ENCODE measurements at regions of chr19 and their contacts with region 1.

Region 1: GRCh38 chr19:42396381-42397262 is 6.5 kb upstream of the CNFN start:
- H3K4me3 ChIP-seq: peak overlapping the region; percentile 61
- H3K27ac ChIP-seq: peak overlapping the region; percentile 91
- H3K4me1 ChIP-seq: peaks cover 13% of the 10 kb centered on the region
- CTCF ChIP-seq: no peak

Region 2: DNA sequence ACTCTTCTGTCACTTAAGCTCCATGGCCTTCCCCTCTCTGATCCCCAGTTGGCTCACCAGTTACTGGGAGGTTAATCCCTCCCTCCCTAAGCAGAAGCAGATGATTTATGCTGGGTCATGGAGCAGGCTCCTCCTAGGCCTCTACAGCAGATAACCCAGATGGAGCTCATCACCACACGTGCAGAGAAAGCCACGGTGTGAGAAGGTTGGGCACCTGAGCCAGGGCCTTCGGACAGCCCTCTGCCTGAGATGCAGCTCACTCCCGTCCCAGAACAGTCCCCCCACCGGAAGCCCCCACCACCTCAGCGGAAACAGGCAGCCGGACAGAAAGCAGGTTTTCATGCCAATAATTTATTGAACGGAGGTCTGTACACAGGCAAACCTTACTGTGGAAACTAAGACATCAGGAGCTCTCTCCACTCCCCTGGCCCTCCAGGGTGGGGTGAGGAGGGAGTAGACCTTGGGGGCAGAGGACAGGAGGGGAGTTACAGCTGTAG is 166.7 kb before region 1 on chr19:
- CTCF ChIA-PET with region 1: no interaction called
- POLR2A ChIA-PET with region 1: interaction called, 11 read pairs
- H3K4me3 ChIP-seq: no peak overlapping the region
- H3K27ac ChIP-seq: peak overlapping the region; percentile 34; the same call in 1 of the 2 replicates
- H3K4me1 ChIP-seq: no peaks in the 10 kb centered on the region
- CTCF ChIP-seq: no peak

Region 3: GRCh38 chr19:42363614-42364346 is 32.8 kb before region 1 on chr19:
- CTCF ChIA-PET with region 1: interaction called, 3 read pairs
- POLR2A ChIA-PET with region 1: interaction called, 11 read pairs
- H3K4me3 ChIP-seq: no peak overlapping the region
- H3K27ac ChIP-seq: no peak overlapping the region
- H3K4me1 ChIP-seq: 0 out of 2 replicates have a peak, but pooled peaks cover 3% of the 10 kb centered on the region
- CTCF ChIP-seq: no peak

Region 4: DNA sequence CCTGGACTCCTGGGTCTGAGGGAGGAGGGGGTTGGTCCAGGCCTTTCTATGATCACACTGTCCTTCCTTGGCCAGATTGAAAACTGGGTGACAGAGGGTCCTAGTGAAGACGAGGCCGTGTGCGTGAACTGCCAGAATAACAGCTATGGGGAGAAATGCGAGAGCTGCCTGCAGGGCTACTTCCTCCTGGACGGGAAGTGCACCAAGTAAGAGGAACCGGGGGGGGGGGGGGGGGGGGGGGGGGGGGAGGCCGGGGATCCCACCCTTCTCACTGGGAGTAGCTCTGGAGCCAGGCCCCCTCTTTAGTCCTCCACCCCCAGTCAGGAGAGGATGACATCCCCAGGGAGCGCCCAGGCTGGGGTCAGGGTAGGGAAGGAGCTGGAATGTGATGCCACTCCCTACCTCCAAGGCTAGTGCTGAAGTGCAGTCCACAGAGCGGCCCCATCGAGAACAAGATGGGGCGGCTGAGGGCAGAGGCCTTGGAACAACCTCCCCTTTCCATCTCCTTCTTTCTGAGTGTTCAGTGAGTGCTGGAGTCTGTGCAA is 25.9 kb before region 1 on chr19:
- CTCF ChIA-PET with region 1: interaction called, 4 read pairs
- POLR2A ChIA-PET with region 1: interaction called, 11 read pairs
- H3K4me3 ChIP-seq: no peak overlapping the region
- H3K27ac ChIP-seq: no peak overlapping the region
- H3K4me1 ChIP-seq: 0 out of 2 replicates have a peak, but pooled peaks cover 3% of the 10 kb centered on the region
- CTCF ChIP-seq: no peak

Region 5: DNA sequence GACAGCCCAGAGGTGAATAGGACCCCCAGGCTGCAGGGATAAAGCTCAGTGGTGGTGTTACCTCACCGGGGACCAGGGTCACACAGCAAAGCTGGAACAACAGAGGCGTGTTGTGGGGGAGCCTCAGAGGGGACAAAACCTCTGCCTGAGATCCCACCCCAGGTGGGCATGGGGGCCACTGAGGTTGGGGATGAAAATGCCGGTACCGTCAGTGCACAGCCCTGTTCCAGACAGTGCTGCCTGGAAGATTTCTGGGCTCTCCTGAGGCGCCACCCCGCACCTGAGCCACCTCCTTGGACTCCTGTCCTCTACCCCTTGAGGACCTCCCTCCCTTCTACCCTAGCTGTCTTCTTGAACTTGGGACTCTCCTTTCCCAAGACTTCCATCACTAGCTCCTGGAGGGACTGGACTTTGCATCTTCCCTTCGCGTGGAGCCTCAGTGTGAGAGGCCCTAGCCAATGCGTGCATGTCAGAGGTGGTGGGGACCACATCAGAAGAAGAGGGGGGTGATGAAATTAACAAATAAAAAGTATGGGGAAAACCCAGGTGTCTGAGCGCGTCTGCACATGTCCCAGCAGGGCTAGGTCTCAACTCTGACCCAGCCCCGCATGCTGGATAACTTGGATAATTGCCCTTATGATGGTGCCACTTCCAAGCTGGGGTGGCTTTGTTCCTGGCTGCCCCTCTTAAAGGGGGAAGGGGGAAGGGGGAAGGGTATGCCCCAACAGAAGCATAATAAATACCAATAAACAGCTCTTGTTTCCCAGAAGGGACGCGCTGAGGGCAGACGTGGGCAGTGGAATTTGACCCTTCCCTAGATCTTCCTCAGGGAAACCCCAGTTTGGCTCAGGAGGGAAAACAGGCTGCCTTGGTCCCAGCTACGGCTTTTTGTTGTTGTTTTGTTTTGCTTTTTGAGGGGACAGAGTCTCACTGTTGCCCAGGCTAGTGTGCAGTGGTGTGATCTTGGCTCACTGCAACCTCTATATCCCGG is 18.1 kb before region 1 on chr19:
- CTCF ChIA-PET with region 1: interaction called, 10 read pairs
- POLR2A ChIA-PET with region 1: interaction called, 41 read pairs
- H3K4me3 ChIP-seq: no peak overlapping the region
- H3K27ac ChIP-seq: no peak overlapping the region
- H3K4me1 ChIP-seq: no peaks in the 10 kb centered on the region
- CTCF ChIP-seq: no peak

Region 6: GRCh38 chr19:42412227-42412626 is 15.6 kb after region 1 on chr19:
- CTCF ChIA-PET with region 1: interaction called, 12 read pairs
- POLR2A ChIA-PET with region 1: interaction called, 19 read pairs
- H3K4me3 ChIP-seq: no peak overlapping the region
- H3K27ac ChIP-seq: peak overlapping the region; percentile 11; the same call in 1 of the 2 replicates
- H3K4me1 ChIP-seq: peaks cover 8% of the 10 kb centered on the region
- CTCF ChIP-seq: no peak

Region 7: GRCh38 chr19:42498169-42498757 is 101.6 kb after region 1 on chr19:
- CTCF ChIA-PET with region 1: no interaction called
- POLR2A ChIA-PET with region 1: no interaction called
- H3K4me3 ChIP-seq: no peak overlapping the region
- H3K27ac ChIP-seq: no peak overlapping the region
- H3K4me1 ChIP-seq: peaks cover 6% of the 10 kb centered on the region; the same call in 1 of the 2 replicates
- CTCF ChIP-seq: no peak

Region 8: GRCh38 chr19:42584466-42584865 is 187.8 kb after region 1 on chr19:
- CTCF ChIA-PET with region 1: no interaction called
- POLR2A ChIA-PET with region 1: no interaction called
- H3K4me3 ChIP-seq: no peak overlapping the region
- H3K27ac ChIP-seq: no peak overlapping the region
- H3K4me1 ChIP-seq: no peaks in the 10 kb centered on the region
- CTCF ChIP-seq: no peak